A673 (cell line): ENCODE measurements at regions of chr5 and their contacts with region 1.

Region 1: DNA sequence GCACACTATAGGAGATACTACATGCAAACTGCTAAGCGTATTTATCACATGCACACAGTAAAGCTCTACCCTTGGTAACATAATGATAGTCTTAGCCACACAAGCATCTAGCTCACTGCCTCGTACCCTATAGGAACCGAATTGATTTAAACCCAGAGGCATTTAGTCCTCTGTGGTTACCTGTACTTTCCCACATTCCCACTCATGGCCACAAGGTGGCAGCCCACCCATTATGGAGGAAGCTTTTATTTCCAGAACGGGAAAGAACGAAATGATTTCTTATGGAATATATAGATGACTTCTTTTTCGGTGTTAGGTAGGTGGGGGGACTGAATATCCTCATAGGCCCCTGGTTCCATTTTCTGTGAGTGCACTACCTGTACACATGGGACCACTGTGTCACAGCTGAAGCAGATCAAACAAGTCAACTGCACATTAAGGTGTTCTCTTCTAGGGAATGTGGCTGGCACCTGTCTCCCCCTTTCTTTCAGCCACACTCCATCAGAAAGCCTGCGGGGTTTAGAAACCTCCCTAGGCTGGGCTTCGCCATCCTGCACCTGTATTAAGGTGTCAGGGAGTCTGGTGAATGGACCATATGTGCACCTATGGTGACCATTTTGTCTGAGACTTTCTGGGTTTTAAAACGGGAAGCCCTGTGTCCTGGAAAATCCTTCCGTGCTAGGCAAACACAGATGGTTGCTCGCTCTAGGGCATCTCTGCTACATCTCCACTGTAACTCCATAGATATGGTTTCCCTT is 313.2 kb downstream of the SLIT3 start:
- DNase-seq: peak; percentile 61
- H3K4me3 ChIP-seq: no peak overlapping the region
- H3K27ac ChIP-seq: no peak overlapping the region
- H3K4me1 ChIP-seq: no peaks in the 10 kb centered on the region
- H3K27me3 ChIP-seq: peaks cover 47% of the 10 kb centered on the region
- CTCF ChIP-seq: peak; percentile 85

Region 2: GRCh38 chr5:169548315-169548714 is 560.6 kb after region 1 on chr5:
- CTCF ChIA-PET with region 1: no interaction called
- POLR2A ChIA-PET with region 1: no interaction called
- intact Hi-C with region 1: loop called (anchors 10 kb)
- DNase-seq: peak; percentile 2
- H3K4me3 ChIP-seq: no peak overlapping the region
- H3K27ac ChIP-seq: no peak overlapping the region
- H3K4me1 ChIP-seq: no peaks in the 10 kb centered on the region
- H3K27me3 ChIP-seq: peaks cover 51% of the 10 kb centered on the region
- CTCF ChIP-seq: 0 out of 2 replicates have a peak, but pooled peaks have one; percentile 26

Region 3: GRCh38 chr5:169583424-169584204 is 595.9 kb after region 1 on chr5 and contains the start of gene SPDL1:
- CTCF ChIA-PET with region 1: no interaction called
- POLR2A ChIA-PET with region 1: no interaction called
- intact Hi-C with region 1: loop called (anchors 2 kb)
- DNase-seq: peak; percentile 95
- H3K4me3 ChIP-seq: peak within 1 kb of the TSS; percentile 88
- H3K27ac ChIP-seq: peak within 1 kb of the TSS; percentile 91
- H3K4me1 ChIP-seq: peaks cover 6% of the 10 kb centered on the region
- H3K27me3 ChIP-seq: peaks cover 9% of the 10 kb centered on the region
- CTCF ChIP-seq: no peak
- total RNA-seq, gene SPDL1: 50.2 and 57.6 TPM in 2 replicates